ENCODE measurements at regions of chr6 and their contacts with region 1.

Region 1: GRCh38 chr6:127420556-127420955 is 38.6 kb downstream of the KIAA0408 start:
- DNase-seq: peak; percentile 74
- H3K4me3 ChIP-seq: no peak overlapping the region
- H3K27ac ChIP-seq: no peak overlapping the region
- H3K4me1 ChIP-seq: peaks cover 0 to 8% (median 2%) of the 10 kb centered on the region in 6 donors
- H3K27me3 ChIP-seq: no peaks in the 10 kb centered on the region
- CTCF ChIP-seq: peak in 7 of 11 experiments; percentile 31 to 56 (median 41)
- POLR2A ChIP-seq: no peak

Region 2: DNA sequence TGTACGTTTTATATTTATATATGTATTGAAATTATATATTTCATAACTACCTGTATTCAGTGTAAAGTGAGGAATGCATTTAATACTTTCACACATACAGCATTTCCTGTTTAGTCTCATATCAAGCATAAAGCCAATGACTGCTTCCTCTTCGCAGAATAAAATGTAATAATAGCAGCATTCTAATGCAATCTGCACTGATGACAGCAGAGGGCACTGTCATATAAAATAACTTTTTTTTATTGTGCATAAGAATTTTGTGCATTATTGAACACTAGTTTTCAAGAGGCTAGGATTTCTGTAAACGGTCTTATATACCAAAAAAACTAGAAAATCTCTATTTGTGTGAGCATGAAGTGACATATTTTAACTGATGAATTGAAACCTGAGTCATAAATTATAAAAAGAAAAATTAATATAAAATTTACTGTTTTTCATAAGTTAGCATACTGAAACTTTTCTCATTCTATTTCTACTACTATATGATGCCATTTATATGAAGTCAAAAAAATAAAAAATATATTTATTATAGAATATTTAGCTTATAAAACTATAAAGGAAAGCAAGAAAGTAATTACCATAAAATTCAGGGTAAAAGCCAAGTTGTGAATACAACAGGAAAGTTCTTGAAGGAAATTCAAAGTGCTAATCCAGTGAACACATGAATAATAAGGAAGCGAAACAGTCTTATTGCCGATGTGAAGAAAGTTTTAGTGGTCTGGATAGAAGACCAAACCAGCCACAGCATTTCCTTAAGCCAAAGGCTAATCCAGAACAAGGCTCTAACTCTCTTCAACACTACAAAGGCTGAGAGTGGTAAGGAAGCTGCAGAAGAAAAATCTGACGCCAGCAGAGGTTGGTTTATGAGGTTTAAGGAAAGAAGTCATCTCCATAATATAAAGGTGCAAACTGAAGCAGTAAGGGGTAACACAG is 117.6 kb before region 1 on chr6:
- intact Hi-C with region 1: loop called (anchors 10 kb)
- DNase-seq: no peak
- H3K4me3 ChIP-seq: no peak overlapping the region
- H3K27ac ChIP-seq: no peak overlapping the region
- H3K4me1 ChIP-seq: peaks cover 0 to 33% (median 25%) of the 10 kb centered on the region in 6 donors
- H3K27me3 ChIP-seq: no peaks in the 10 kb centered on the region
- CTCF ChIP-seq: peak; percentile 47 to 85 (median 76)
- POLR2A ChIP-seq: no peak

Region 3: GRCh38 chr6:127582777-127583462 is 162.4 kb after region 1 on chr6:
- intact Hi-C with region 1: no loop called
- DNase-seq: no peak
- H3K4me3 ChIP-seq: no peak overlapping the region
- H3K27ac ChIP-seq: no peak overlapping the region
- H3K4me1 ChIP-seq: no peaks in the 10 kb centered on the region
- H3K27me3 ChIP-seq: no peaks in the 10 kb centered on the region
- CTCF ChIP-seq: no peak
- POLR2A ChIP-seq: no peak

Measured in spleen (tissue), 13 donors.